ENCODE measurements at regions of chr4 and their contacts with region 1.

Region 1: DNA sequence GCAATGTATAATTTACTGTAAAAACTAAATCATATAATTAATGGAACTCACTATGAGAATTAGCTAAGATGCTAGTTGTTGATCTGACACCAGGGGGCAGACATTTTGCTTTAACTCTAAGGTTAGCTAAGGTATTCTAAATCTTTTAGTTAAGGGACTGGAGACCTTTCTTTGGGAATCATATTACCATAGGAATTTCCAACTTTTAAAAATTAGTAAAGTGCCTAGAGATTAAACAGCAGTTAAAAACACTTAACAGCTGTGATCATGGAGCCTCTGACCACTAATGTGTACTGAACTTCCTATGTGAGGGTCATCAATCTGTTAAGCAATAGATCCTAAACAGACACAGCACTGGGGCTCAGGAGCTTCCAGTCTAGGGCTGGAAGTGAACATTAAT is 226.6 kb downstream of the NSUN7 start:
- DNase-seq: no peak
- ATAC-seq: peak; percentile 55

Region 2: GRCh38 chr4:40840985-40841571 is 135.3 kb before region 1 on chr4:
- intact Hi-C with region 1: no loop called
- DNase-seq: peak; percentile 76
- ATAC-seq: peak; percentile 58

Region 3: GRCh38 chr4:41216294-41217019 is 240.1 kb after region 1 on chr4:
- intact Hi-C with region 1: loop called (anchors 2 kb)
- DNase-seq: peak; percentile 77
- ATAC-seq: peak; percentile 49

Region 4: DNA sequence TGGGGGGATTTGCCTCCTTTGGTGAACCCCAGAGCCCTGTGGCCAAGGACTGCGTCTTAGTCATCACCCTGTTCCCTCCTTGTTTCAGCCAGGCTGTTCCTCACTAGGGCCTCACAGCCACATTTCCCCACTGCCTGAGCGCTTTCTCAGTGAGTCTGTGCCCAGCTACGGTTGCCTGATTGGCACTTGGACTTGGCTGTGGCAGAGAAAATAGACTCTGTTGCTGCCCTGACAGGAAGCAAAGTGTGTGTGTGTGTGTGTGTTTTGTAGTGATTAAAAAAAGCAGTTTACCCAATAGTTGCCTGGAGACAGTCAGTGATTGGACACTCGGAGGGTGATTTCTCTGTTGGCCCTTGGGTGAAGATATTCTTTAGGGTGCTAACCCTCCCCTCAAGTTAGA is 393.4 kb after region 1 on chr4:
- intact Hi-C with region 1: no loop called
- DNase-seq: peak; percentile 65
- ATAC-seq: peak; percentile 90

Measured in left ventricle myocardium superior (tissue), 1 donor.